Calu3 (cell line): ENCODE measurements at regions of chr22 and their contacts with region 1.

Region 1: GRCh38 chr22:45526281-45526680 is 23.6 kb downstream of the FBLN1 start:
- DNase-seq: no peak
- H3K4me3 Mint-ChIP-seq: no peak overlapping the region
- H3K27ac Mint-ChIP-seq: no peak overlapping the region
- H3K4me1 Mint-ChIP-seq: no peaks in the 10 kb centered on the region
- H3K27me3 Mint-ChIP-seq: no peaks in the 10 kb centered on the region
- CTCF ChIP-seq: no peak

Region 2: DNA sequence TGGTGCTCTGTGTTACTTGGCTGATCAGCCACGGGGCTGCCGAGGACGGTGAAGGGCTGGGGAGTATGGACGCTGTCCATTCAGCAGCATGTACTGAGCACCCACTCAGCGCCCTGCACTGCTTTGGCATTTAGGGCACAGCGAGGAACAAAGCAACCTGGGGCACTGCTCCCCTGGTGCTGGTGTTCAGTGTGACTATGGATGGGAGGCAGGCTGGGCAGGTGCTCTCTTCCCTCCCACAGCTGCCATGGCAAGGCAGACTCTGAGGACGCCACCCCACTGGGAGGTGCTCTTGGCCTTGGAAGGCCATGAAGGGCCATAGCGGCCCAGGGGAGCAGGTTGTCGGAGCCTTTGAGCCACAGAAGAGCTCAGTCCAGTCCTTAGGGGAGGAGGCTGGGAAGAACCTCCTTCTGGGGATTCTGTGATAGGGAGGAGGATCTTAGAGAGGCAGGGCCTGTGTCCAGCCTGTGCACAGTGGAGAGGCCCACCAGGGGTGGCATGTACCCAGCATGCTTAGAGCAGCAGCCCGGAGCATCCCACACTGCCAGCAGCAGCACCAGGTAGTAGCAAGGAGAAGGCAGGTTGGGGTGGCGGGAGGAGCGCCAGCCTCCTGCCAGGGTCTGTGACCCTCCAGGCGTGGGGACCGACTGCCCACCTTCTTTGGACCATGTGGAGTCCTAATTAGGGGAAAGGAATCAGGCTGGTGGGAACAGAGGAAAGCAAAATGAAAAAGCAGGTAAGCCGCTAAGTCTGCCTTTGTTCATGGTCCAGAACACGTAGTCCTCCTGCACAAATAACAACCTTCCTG is 1972.6 kb before region 1 on chr22:
- CTCF ChIA-PET with region 1: interaction called, 10 read pairs
- intact Hi-C with region 1: no loop called
- DNase-seq: no peak
- H3K4me3 Mint-ChIP-seq: no peak overlapping the region
- H3K27ac Mint-ChIP-seq: no peak overlapping the region
- H3K4me1 Mint-ChIP-seq: no peaks in the 10 kb centered on the region
- H3K27me3 Mint-ChIP-seq: peaks cover 59% of the 10 kb centered on the region
- CTCF ChIP-seq: no peak

Region 3: DNA sequence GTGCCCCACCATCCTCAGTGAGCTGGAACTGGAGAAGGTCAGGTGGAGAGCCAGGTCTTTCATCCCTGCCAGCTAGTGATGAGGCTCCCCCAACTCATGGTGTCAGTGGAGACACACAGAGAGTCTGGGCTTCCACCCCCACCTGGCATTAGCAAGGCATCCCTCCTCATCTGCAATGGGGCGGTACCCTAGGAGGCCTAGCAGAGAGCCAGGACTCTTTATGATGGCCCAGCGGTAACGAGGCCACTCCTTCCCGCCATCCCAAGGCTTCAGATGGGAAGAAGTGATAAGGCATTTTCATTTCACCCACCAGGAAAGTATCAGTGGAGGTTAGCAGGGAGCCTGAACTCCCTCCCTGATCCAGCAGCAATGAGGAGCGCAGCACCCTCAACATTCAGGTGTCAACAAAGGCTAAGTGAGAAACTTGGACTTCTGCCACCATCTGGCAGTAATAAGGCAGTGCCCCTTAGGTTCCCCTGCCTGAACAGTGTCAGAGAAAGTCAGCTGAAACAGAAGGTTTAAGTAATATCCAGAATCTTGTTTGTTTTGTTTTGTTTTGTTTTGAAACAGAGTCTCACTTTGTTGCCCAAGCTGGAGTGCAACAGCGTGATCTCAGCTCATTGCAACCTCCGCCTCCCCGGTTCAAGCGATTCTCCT is 64.1 kb before region 1 on chr22:
- CTCF ChIA-PET with region 1: no interaction called
- intact Hi-C with region 1: no loop called
- DNase-seq: no peak
- H3K4me3 Mint-ChIP-seq: no peak overlapping the region
- H3K27ac Mint-ChIP-seq: no peak overlapping the region
- H3K4me1 Mint-ChIP-seq: no peaks in the 10 kb centered on the region
- H3K27me3 Mint-ChIP-seq: peaks cover 26% of the 10 kb centered on the region
- CTCF ChIP-seq: no peak